ENCODE measurements at regions of chr22 and their contacts with region 1.

Region 1: GRCh38 chr22:24005201-24005600 is at the start of gene GSTT4:
- DNase-seq: peak in 1 of 2 donors; percentile 63
- ATAC-seq: peak in 3 of 4 donors; percentile 37 to 46 (median 39)
- H3K4me3 ChIP-seq: no peak within 1 kb of the TSS
- H3K27ac ChIP-seq: peak within 1 kb of the TSS; percentile 46
- H3K4me1 ChIP-seq: peaks cover 4% of the 10 kb centered on the region
- H3K27me3 ChIP-seq: no peaks in the 10 kb centered on the region
- CTCF ChIP-seq: no peak
- total RNA-seq, gene GSTT4: not detected

Region 2: DNA sequence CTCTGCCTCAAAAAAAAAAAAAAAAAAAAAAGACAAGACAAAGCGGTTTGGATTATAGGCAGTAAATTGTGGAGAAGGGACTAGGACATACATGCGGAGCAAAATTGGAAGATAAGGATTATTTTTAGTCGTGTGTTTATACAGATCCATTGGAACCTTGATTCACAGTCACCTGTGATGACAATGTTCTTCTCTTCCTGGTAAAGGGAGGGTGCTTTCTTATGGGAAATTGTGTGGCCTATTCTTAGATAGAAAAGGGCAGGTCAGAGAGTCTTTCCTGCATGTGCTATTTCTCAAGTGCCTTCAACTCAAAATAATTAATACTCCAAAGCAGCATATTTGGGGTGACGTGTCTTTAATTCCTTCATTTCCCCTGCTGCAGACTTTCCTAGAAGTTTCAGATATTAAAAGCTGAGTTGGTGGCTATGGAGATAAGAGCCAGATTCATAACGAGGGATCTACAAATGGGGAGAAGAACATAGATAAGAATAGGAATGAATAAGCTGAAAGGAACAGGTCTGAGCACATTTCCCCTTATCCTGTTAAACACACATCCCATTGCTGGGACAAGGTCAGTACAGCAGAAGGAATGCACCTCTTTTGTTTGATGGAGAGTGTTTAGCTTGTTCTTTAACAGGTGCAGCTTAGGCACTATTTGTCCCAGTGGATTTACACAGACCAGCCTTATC is 66.7 kb before region 1 on chr22:
- intact Hi-C with region 1: loop called in 1 of 2 experiments (anchors 5 kb)
- DNase-seq: no peak
- ATAC-seq: no peak
- H3K4me3 ChIP-seq: no peak overlapping the region
- H3K27ac ChIP-seq: no peak overlapping the region
- H3K4me1 ChIP-seq: no peaks in the 10 kb centered on the region
- H3K27me3 ChIP-seq: no peaks in the 10 kb centered on the region
- CTCF ChIP-seq: no peak

Region 3: GRCh38 chr22:24156913-24157821 is 152.0 kb after region 1 on chr22:
- intact Hi-C with region 1: loop called in 1 of 2 experiments (anchors 5 kb)
- DNase-seq: peak; percentile 83 to 88
- ATAC-seq: peak; percentile 74 to 86 (median 80)
- H3K4me3 ChIP-seq: peak overlapping the region; percentile 84
- H3K27ac ChIP-seq: peak overlapping the region; percentile 71
- H3K4me1 ChIP-seq: peaks cover 16% of the 10 kb centered on the region
- H3K27me3 ChIP-seq: no peaks in the 10 kb centered on the region
- CTCF ChIP-seq: peak; percentile 67